Right cardiac atrium (tissue), 5 donors: ENCODE measurements at regions of chr10 and their contacts with region 1.

Region 1: DNA sequence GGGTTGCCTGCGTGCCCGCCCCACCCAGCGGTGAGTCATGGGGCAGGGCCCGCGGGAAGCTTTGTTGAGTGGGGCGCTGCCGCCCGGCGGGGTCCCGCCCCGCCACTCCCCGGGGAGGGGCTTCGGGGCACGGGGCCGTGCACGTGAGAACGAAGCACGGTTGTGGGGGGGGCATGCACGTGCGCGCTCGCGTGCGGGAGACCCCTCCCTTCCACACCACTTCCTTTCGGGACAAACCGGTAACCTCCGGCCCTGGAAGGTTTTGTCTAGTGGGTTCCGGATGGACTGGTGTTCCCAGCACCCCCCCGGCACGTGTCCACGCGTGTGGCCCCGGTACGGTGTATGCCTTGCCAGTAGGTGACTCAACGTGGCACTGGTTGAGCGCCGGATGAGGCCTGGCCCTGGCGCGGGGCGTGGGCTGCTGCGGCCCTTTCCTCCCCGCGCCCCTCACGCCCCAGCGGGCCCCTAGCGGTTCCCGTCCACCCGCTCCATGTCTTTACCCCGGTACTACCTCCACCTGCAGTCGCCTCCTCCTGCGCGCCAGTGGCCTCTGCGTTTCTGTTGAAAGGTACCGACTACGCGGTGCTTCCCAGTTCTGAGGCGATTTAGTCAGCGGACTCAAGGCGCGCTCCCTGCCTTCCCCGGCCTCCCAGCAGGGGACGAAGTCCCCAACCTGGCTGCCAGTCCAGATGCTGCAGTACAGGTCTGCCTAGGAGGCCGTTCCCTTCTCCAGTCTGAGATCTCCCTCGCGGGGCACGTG is 3.1 kb downstream of the ADIRF start:
- DNase-seq: peak; percentile 94 to 97 (median 97)
- ATAC-seq: peak; percentile 86
- H3K4me3 ChIP-seq: peak overlapping the region; percentile 55
- H3K27ac ChIP-seq: peak overlapping the region; percentile 90
- H3K4me1 ChIP-seq: peaks cover 18% of the 10 kb centered on the region
- H3K27me3 ChIP-seq: no peaks in the 10 kb centered on the region

Region 2: GRCh38 chr10:87094373-87095235 is 123.2 kb after region 1 on chr10 and contains the starts of genes GLUD1 and SHLD2:
- intact Hi-C with region 1: loop called in 1 of 4 experiments (anchors 10 kb)
- DNase-seq: peak; percentile 95 to 97 (median 97)
- ATAC-seq: peak; percentile 86
- H3K4me3 ChIP-seq: peak within 1 kb of the TSS; percentile 61
- H3K27ac ChIP-seq: peak within 1 kb of the TSS; percentile 98
- H3K4me1 ChIP-seq: no peaks in the 10 kb centered on the region
- H3K27me3 ChIP-seq: no peaks in the 10 kb centered on the region
- total RNA-seq, gene GLUD1: 85.7 to 94.5 (median 88.8) TPM
- total RNA-seq, gene SHLD2: 15.4 to 24.6 (median 17.2) TPM

Region 3: DNA sequence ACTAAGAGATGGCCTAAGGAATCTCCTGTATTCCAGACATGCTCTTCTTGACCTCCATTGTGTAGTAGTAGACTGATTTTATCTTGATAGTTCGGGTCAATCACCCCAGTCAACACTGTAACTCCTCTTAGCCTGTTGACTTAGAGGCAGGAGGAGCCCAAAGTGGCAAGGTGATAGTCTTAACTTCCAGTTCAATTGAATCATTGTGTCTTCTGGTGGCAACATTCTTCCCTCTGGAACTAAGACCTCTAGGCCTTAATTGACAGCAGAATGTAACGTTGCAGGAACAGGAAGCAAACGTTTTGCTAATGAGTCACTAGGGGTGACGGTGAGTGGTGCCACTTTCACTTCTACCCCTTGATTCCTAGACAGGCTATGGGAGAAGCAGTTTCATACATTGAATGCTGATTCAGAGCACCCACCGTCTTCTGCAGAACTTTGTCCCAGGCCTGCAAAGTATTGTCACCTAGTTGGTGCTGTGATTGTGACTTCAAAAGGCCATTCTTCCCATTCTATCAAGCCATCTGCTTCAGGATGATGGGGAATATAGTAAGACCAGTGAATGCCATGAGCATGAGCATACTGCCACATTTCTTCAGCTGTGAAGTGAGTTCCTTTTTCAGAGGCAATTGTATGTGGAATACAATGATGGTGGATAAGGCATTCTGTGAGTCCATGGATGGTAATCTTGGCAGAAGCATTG is 664.3 kb after region 1 on chr10:
- intact Hi-C with region 1: no loop called
- DNase-seq: no peak
- ATAC-seq: no peak
- H3K4me3 ChIP-seq: no peak overlapping the region
- H3K27ac ChIP-seq: no peak overlapping the region
- H3K4me1 ChIP-seq: no peaks in the 10 kb centered on the region
- H3K27me3 ChIP-seq: no peaks in the 10 kb centered on the region